Caki2 (cell line): ENCODE measurements at regions of chr3 and their contacts with region 1.

Region 1: GRCh38 chr3:102163036-102163827 is 271.6 kb upstream of the ZPLD1 start:
- DNase-seq: peak; percentile 97

Region 2: GRCh38 chr3:101849721-101850245 is 313.4 kb before region 1 on chr3:
- in situ Hi-C with region 1: loop called (anchors 25 kb)
- DNase-seq: no peak